ENCODE measurements at regions of chr1 and their contacts with region 1.

Region 1: GRCh38 chr1:200184196-200184595 is 156.7 kb downstream of the NR5A2 start:
- DNase-seq: peak; percentile 100
- ATAC-seq: peak; percentile 64
- H3K4me3 ChIP-seq: peak overlapping the region; percentile 1; the same call in 1 of the 2 replicates
- H3K27ac ChIP-seq: peak overlapping the region; percentile 63
- H3K4me1 ChIP-seq: peaks cover 54% of the 10 kb centered on the region
- H3K27me3 ChIP-seq: no peaks in the 10 kb centered on the region
- CTCF ChIP-seq: no peak

Region 2: DNA sequence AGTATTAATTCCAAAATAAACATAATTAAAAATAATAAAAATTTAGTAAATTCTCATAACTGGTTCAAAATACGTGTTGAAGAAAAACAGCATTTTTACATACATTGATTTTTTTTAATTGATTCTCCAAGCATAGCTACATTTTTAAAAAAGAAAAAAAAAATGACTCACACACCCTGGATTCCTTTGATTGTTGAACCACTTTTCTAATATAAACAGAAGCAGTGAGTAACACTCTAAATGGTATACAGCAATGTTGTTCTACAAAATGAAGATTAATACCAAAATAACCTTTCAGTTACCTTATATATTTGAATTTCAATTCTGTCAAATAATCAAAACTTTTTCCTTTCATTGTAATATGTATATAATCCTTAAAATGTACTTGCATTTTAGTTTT is 403.2 kb before region 1 on chr1:
- CTCF ChIA-PET with region 1: no interaction called
- POLR2A ChIA-PET with region 1: no interaction called
- intact Hi-C with region 1: loop called (anchors 5 kb)
- DNase-seq: peak; percentile 85
- ATAC-seq: peak; percentile 53
- H3K4me3 ChIP-seq: no peak overlapping the region
- H3K27ac ChIP-seq: no peak overlapping the region
- H3K4me1 ChIP-seq: peaks cover 33% of the 10 kb centered on the region
- H3K27me3 ChIP-seq: no peaks in the 10 kb centered on the region
- CTCF ChIP-seq: no peak

Region 3: GRCh38 chr1:199976496-199977144 is 207.6 kb before region 1 on chr1:
- CTCF ChIA-PET with region 1: interaction called, 3 read pairs
- POLR2A ChIA-PET with region 1: no interaction called
- intact Hi-C with region 1: loop called (anchors 10 kb)
- DNase-seq: no peak
- ATAC-seq: no peak; the same call in none of the 2 replicates
- H3K4me3 ChIP-seq: no peak overlapping the region
- H3K27ac ChIP-seq: no peak overlapping the region
- H3K4me1 ChIP-seq: no peaks in the 10 kb centered on the region
- H3K27me3 ChIP-seq: 0 out of 2 replicates have a peak, but pooled peaks cover 7% of the 10 kb centered on the region
- CTCF ChIP-seq: no peak

Region 4: DNA sequence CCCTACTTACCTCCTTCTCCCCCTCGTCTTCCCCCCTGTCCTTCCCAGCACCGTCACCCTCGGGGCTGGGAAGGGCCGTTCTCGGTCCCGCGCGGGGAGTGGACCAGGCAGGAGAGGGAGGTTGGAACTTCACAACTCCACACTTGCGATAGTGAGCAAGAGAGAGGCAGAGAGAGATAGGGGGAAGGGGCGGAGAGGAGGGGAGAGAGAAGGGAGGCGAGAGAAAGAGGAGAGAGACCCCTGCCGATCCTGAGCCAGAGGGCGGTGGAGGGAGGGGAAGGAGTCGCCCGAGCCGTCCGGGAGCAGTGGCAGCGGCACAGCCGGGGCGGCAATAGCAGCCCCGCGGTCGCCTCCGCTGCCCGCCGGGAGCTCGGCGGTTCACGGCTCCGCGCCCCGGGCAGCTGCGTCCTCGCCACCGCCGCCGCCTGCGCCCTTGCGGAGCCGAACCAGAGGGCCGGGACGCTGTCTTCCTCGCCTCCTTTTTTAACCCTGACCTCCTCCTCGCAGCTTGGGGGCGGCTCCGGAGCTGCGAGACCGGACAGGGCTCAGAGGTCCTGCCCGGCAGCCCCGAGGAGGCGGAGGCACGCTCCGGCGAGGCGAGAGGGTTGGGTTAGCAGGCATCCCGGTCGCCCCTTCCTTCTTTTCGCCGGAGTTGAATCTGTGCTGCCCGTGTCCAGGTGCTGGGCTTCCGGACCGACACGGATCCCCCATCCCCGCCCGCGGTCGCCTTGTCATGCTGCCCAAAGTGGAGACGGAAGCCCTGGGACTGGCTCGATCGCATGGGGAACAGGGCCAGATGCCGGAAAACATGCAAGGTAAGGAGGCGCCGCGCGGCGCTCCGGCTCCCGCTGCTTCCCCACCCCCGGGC is 145.0 kb before region 1 on chr1:
- CTCF ChIA-PET with region 1: no interaction called
- POLR2A ChIA-PET with region 1: no interaction called
- intact Hi-C with region 1: loop called (anchors 1 kb)
- DNase-seq: peak; percentile 71
- ATAC-seq: peak; percentile 84
- H3K4me3 ChIP-seq: peak overlapping the region; percentile 70
- H3K27ac ChIP-seq: no peak overlapping the region
- H3K4me1 ChIP-seq: peaks cover 7% of the 10 kb centered on the region; the same call in 1 of the 2 replicates
- H3K27me3 ChIP-seq: peaks cover 79% of the 10 kb centered on the region
- CTCF ChIP-seq: no peak; the same call in 1 of the 2 replicates

Region 5: DNA sequence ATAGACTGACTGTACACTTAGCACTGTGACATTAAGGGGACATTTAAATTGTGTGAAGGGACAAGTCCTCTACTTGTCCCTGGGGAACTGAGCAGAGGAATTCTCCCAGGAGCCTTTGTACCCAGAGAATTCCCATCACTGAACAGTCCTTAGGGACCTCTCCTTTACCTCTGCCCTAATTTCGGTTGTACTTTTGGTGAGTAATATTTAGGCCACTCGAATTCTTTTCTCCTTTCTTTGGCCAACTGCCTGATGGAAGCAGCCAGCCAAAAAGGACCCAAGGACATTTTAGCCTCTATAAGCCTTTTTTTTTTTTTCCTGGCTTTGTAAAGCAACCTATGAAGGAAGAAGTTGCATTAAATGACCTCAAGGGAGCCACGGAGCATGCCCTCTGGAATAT is 85.2 kb before region 1 on chr1:
- CTCF ChIA-PET with region 1: no interaction called
- POLR2A ChIA-PET with region 1: no interaction called
- intact Hi-C with region 1: loop called (anchors 5 kb)
- DNase-seq: peak; percentile 85
- ATAC-seq: peak; percentile 75
- H3K4me3 ChIP-seq: no peak overlapping the region
- H3K27ac ChIP-seq: no peak overlapping the region
- H3K4me1 ChIP-seq: peaks cover 16% of the 10 kb centered on the region
- H3K27me3 ChIP-seq: no peaks in the 10 kb centered on the region
- CTCF ChIP-seq: no peak

Region 6: DNA sequence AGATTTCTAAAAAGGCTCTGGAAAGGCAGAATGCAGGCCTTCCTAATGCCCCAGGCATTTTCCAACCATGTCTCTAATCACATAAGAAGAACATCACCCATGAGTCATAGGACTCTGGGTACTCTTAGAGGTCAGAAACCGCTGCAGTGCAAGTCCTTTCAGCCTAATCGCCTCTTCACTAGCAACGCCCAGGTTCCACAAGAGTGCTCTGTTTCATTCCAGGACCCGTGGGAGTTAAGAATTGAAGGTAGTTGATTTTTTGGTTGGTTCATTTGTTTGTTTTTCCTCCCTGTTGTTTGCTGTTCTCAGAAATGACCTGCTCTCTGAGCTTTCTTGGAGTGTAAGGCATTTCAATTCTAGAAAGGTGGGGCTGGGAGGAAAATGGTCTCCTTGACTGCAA is 33.5 kb before region 1 on chr1:
- CTCF ChIA-PET with region 1: no interaction called
- POLR2A ChIA-PET with region 1: no interaction called
- intact Hi-C with region 1: loop called (anchors 1 kb)
- DNase-seq: peak; percentile 99
- ATAC-seq: peak; percentile 99
- H3K4me3 ChIP-seq: 0 out of 2 replicates have a peak overlapping the region, but pooled peaks have one; percentile 2
- H3K27ac ChIP-seq: peak overlapping the region; percentile 81
- H3K4me1 ChIP-seq: peaks cover 27% of the 10 kb centered on the region
- H3K27me3 ChIP-seq: no peaks in the 10 kb centered on the region
- CTCF ChIP-seq: no peak; the same call in 1 of the 2 replicates

Region 7: GRCh38 chr1:200279810-200280411 is 95.7 kb after region 1 on chr1:
- CTCF ChIA-PET with region 1: interaction called, 10 read pairs
- POLR2A ChIA-PET with region 1: no interaction called
- intact Hi-C with region 1: no loop called
- DNase-seq: peak; percentile 99
- ATAC-seq: peak; percentile 88
- H3K4me3 ChIP-seq: no peak overlapping the region
- H3K27ac ChIP-seq: no peak overlapping the region
- H3K4me1 ChIP-seq: no peaks in the 10 kb centered on the region
- H3K27me3 ChIP-seq: no peaks in the 10 kb centered on the region
- CTCF ChIP-seq: peak; percentile 97